ENCODE measurements at regions of chr1 and their contacts with region 1.

Region 1: GRCh38 chr1:67561704-67562113 is 123.3 kb upstream of the GADD45A start:
- DNase-seq: peak; percentile 71
- ATAC-seq: peak; percentile 89
- H3K4me3 ChIP-seq: 0 out of 4 replicates have a peak overlapping the region, but pooled peaks of 1 of the 2 experiments have one; percentile 15
- H3K27ac ChIP-seq: peak overlapping the region; percentile 95
- H3K4me1 ChIP-seq: peaks cover 38% of the 10 kb centered on the region
- H3K27me3 ChIP-seq: no peaks in the 10 kb centered on the region
- CTCF ChIP-seq: peak; percentile 96

Region 2: DNA sequence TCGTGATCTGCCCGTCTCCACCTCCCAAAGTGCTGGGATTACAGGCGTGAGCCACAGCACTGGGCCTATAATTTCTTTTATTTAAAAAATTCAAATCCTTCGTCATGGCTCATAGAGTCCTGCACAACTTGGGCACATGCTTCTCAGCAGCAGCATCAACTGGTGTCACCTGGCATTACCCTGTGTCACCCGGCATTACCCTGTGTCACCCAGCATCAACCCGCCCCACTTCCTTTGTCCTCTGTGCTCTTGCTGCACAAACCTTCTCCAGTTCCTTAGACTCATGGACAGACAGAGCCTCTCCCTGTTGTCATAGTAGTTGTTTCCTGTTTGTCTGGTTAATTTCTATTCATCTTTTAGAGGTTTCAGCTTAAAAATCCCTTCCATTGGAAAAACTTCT is 10.3 kb before region 1 on chr1:
- CTCF ChIA-PET with region 1: no interaction called
- POLR2A ChIA-PET with region 1: no interaction called
- in situ Hi-C with region 1: no loop called
- intact Hi-C with region 1: no loop called
- DNase-seq: no peak
- ATAC-seq: no peak
- H3K4me3 ChIP-seq: no peak overlapping the region
- H3K27ac ChIP-seq: peak overlapping the region; percentile 9; the same call in 1 of the 2 replicates
- H3K4me1 ChIP-seq: peaks cover 5% of the 10 kb centered on the region
- H3K27me3 ChIP-seq: no peaks in the 10 kb centered on the region
- CTCF ChIP-seq: no peak

Region 3: DNA sequence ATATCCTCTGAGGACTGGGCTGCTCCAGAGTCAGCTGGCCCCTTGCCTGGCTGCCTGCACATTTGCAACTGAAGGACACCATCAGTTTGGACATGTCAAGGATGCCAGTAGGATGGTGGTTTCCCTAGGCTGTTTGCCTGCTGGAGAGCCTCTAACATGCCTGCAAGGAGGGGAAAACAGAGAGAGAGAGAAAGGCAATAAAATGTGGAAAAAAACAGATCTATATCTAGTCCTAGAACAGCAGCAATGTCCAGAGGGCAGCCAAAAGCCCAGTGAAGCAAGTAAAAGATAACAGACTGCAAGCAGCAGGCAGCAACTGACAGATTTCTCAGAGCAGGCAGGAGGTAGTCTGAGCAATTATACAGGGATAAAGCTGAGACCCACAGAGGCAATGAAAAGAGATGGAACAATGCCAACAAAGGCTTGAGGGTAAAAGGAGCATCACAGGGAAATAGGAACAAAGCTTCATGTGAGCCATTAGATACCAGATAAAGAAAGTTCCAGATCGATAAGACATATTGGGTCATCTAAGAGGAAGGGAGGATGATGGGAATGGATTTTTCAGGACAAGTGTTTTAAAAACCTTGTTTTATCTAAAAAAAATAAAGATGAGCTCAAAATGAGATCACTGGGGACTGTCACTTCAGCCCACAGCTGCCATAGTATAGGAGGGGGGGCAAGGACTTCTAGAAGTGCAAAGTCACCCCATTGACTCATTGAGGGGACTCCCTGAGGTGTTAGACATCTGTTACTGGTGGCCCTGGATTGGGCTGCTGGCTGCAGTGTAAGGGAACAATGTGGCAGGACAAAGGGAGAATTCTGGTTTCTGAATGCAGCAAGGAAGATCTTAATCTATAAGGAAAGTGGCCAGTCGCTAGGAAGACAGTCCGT is 84.7 kb after region 1 on chr1:
- CTCF ChIA-PET with region 1: no interaction called
- POLR2A ChIA-PET with region 1: no interaction called
- in situ Hi-C with region 1: no loop called
- intact Hi-C with region 1: loop called (anchors 5 kb)
- DNase-seq: no peak
- ATAC-seq: peak; percentile 86
- H3K4me3 ChIP-seq: no peak overlapping the region
- H3K27ac ChIP-seq: peak overlapping the region; percentile 100
- H3K4me1 ChIP-seq: peaks cover 46% of the 10 kb centered on the region
- H3K27me3 ChIP-seq: no peaks in the 10 kb centered on the region
- CTCF ChIP-seq: no peak

Measured in Panc1 (cell line).